ENCODE measurements at regions of chr22 and their contacts with region 1.

Region 1: DNA sequence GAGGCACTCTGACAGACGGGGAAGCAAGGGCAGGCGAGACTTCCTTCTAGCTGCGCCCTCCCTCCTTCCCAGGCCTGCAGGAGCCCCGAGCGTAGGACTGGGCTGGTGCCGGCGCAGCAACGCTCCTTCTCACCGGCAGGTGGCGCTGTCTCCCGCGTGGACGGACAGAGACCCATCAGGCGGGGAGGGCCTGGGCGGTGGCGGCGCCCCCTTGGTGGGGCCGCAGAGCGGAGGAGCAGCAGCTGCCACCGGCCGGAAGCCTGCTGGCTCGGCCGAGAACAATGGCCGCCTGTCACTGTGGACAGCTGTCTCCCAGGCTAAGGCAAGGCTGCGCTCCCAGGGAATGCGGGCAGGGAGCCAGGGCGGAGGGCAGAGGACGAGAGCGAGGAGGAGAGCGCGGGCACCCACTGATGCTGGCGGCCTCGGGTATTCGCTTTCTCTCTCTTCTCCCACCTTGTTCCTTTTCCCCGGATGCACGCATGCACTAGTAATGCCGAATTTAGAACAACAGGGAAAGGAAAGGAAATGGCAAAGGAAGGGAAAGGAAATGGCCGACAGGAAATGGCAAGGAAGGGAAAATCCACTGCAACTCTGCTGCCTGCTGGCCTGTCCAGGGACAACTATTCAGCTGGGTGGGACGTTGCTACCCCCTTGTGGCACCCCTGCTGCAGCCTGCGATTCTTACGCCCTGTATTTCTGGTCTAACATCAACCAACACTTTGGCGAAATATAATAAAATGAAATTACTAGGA is 14.4 kb downstream of the PPM1F start:
- DNase-seq: peak; percentile 96 to 97 (median 96)
- H3K4me3 ChIP-seq: peak overlapping the region; percentile 64 to 95 (median 83)
- H3K27ac ChIP-seq: peak overlapping the region; percentile 71 to 98
- H3K4me1 ChIP-seq: peaks cover 0 to 45% (median 23%) of the 10 kb centered on the region in 3 donors
- H3K27me3 ChIP-seq: no peaks in the 10 kb centered on the region
- CTCF ChIP-seq: peak; percentile 99

Region 2: DNA sequence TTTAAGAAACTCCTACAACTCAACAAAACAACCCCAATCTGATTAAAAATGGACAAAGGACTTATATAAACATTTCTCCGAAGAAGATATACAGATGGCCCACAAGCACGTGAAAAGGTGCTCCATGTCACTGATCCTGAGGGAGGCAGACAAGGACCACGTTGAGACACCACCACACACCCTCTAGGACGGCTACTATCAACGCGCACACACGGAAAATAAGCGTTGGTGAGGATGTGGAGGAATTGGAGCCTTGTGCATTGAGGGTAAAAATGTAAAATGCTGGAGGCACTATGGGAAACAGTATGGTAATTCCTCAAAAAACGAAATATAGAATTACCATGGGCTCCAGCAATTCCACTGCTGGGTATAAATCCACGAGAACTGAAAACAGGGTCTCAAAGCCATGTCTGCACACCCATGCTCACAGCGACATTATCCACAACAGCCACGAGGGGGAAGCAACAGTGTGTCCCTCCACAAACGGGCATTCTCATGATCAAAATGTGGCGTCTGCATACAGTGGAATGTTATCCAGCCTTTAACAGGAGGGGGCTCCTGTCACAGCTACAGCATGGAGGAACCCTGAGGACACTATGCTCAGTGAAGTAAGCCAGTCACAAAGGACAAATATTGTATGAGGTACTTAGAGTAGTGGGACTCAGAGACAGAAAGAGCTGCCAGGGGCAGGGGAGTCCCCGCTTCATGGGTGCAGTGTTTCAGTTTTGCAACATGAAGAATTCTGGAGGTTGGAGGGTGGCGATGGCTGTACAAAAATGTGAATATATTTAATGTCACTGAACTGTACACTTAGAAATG is 225.1 kb before region 1 on chr22:
- intact Hi-C with region 1: loop called (anchors 10 kb)
- DNase-seq: peak in 4 of 5 donors; percentile 67 to 92 (median 74)
- H3K4me3 ChIP-seq: peak overlapping the region in 2 of 3 donors; percentile 13 to 33
- H3K27ac ChIP-seq: no peak overlapping the region
- H3K4me1 ChIP-seq: peaks cover 0 to 6% (median 0%) of the 10 kb centered on the region in 3 donors
- H3K27me3 ChIP-seq: no peaks in the 10 kb centered on the region
- CTCF ChIP-seq: peak; percentile 87